Endothelial cell of umbilical vein (primary cell): ENCODE measurements at regions of chr12 and their contacts with region 1.

Region 1: DNA sequence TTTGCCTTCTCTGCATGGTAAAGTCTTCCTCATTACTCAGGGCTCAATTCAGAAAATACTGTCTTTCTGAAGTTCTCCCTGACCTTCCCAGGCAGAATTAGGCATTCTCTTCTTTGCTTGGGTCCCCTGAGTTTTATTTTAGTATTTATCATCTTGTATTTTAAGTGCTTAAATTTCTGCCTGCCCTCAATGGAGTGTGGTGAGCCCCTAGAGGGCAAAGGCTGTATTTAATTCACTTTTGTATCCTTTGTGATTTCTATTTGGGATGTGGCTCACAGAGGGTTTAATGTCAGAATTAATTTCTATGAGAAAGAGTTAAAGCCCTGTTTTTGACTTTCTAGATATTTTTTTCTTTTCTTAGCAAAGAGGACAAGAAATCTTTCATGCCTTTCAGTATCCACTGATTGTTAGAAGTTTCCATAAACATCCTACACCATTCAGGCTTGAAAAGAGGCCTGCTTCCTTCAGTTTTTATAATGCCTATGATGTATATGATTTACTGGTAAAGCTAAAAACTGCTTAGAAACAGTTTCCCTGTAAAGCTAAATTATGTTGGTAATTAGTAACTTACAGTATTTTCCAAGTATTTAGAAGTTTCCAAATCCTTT is 55.6 kb upstream of the PTPRB start:
- DNase-seq: peak; percentile 73
- H3K4me3 ChIP-seq: no peak overlapping the region
- H3K27ac ChIP-seq: no peak overlapping the region
- H3K4me1 ChIP-seq: peaks cover 16% of the 10 kb centered on the region
- H3K27me3 ChIP-seq: no peaks in the 10 kb centered on the region
- CTCF ChIP-seq: peak; percentile 53 to 55
- POLR2A ChIP-seq: no peak

Region 2: GRCh38 chr12:70598467-70599193 is 94.2 kb before region 1 on chr12:
- CTCF ChIA-PET with region 1: interaction called, 3 read pairs
- POLR2A ChIA-PET with region 1: no interaction called
- dilution Hi-C with region 1: no loop called
- intact Hi-C with region 1: loop called (anchors 2 kb)
- DNase-seq: peak; percentile 96
- H3K4me3 ChIP-seq: peak overlapping the region in 1 of 3 experiments; percentile 40
- H3K27ac ChIP-seq: peak overlapping the region; percentile 92
- H3K4me1 ChIP-seq: peaks cover 48% of the 10 kb centered on the region
- H3K27me3 ChIP-seq: no peaks in the 10 kb centered on the region
- CTCF ChIP-seq: no peak
- POLR2A ChIP-seq: peak; percentile 32

Region 3: DNA sequence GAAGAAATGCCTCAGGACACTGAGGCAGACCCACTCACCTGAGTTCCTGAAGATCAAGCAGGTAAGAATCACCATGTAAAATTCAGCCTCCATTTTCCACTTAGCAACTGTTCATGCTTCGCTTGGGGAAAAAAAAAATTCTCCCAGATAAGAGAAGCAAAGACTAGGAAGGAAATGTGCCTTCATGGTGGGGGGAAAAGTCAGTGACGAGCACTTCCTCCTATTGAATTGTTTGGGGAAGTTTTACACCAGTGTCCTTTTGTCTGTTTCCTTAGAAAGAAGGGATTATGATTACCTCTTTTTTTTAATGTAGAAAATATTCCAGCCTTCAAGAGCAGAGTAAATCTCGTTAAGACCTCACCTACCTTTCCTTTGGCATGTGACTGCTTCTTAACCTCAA is 55.5 kb before region 1 on chr12 and contains the start of gene PTPRB:
- CTCF ChIA-PET with region 1: interaction called, 10 read pairs
- POLR2A ChIA-PET with region 1: no interaction called
- dilution Hi-C with region 1: no loop called
- intact Hi-C with region 1: loop called (anchors 1 kb)
- DNase-seq: peak; percentile 85
- H3K4me3 ChIP-seq: peak within 1 kb of the TSS; percentile 63 to 100 (median 99)
- H3K27ac ChIP-seq: peak within 1 kb of the TSS; percentile 100
- H3K4me1 ChIP-seq: peaks cover 52% of the 10 kb centered on the region
- H3K27me3 ChIP-seq: no peaks in the 10 kb centered on the region
- CTCF ChIP-seq: no peak
- POLR2A ChIP-seq: peak; percentile 45
- total RNA-seq, gene PTPRB: 150 and 151 TPM in 2 replicates

Region 4: GRCh38 chr12:70660620-70661219 is 32.1 kb before region 1 on chr12:
- CTCF ChIA-PET with region 1: interaction called, 4 read pairs
- POLR2A ChIA-PET with region 1: interaction called, 3 read pairs
- dilution Hi-C with region 1: no loop called
- intact Hi-C with region 1: loop called (anchors 1 kb)
- DNase-seq: peak; percentile 57
- H3K4me3 ChIP-seq: no peak overlapping the region
- H3K27ac ChIP-seq: peak overlapping the region; percentile 97
- H3K4me1 ChIP-seq: peaks cover 40% of the 10 kb centered on the region
- H3K27me3 ChIP-seq: no peaks in the 10 kb centered on the region
- CTCF ChIP-seq: no peak
- POLR2A ChIP-seq: no peak

Region 5: GRCh38 chr12:70706611-70707010 is 13.8 kb after region 1 on chr12:
- CTCF ChIA-PET with region 1: interaction called, 6 read pairs
- POLR2A ChIA-PET with region 1: no interaction called
- dilution Hi-C with region 1: no loop called
- intact Hi-C with region 1: loop called (anchors 1 kb)
- DNase-seq: no peak
- H3K4me3 ChIP-seq: no peak overlapping the region
- H3K27ac ChIP-seq: no peak overlapping the region
- H3K4me1 ChIP-seq: peaks cover 18% of the 10 kb centered on the region
- H3K27me3 ChIP-seq: no peaks in the 10 kb centered on the region
- CTCF ChIP-seq: no peak
- POLR2A ChIP-seq: no peak

Region 6: DNA sequence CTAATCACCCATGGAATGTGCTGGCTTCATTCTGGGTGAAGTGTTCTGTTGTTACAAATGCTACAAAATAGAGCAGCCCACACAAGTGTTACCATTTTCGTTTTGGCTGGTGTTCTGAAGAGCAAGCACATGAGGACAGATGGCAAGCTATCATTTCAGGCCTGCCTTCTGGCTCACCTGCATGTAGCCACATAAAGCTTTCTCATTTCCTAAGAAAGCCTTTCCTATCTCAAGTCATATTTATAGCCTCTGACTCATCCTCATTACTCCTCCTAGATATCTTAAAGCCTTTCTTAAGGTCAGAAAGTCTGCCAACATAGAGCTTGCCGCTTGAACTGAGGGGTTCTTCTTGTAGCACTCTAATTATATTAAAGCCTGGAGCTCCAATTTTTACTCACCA is 138.8 kb after region 1 on chr12:
- CTCF ChIA-PET with region 1: no interaction called
- POLR2A ChIA-PET with region 1: no interaction called
- dilution Hi-C with region 1: no loop called
- intact Hi-C with region 1: no loop called
- DNase-seq: no peak
- H3K4me3 ChIP-seq: no peak overlapping the region
- H3K27ac ChIP-seq: no peak overlapping the region
- H3K4me1 ChIP-seq: no peaks in the 10 kb centered on the region
- H3K27me3 ChIP-seq: peaks cover 0 to 2% of the 10 kb centered on the region in 2 experiments
- CTCF ChIP-seq: no peak
- POLR2A ChIP-seq: no peak